Sciatic nerve (tissue), 2 donors: ENCODE measurements at regions of chr20 and their contacts with region 1.

Region 1: DNA sequence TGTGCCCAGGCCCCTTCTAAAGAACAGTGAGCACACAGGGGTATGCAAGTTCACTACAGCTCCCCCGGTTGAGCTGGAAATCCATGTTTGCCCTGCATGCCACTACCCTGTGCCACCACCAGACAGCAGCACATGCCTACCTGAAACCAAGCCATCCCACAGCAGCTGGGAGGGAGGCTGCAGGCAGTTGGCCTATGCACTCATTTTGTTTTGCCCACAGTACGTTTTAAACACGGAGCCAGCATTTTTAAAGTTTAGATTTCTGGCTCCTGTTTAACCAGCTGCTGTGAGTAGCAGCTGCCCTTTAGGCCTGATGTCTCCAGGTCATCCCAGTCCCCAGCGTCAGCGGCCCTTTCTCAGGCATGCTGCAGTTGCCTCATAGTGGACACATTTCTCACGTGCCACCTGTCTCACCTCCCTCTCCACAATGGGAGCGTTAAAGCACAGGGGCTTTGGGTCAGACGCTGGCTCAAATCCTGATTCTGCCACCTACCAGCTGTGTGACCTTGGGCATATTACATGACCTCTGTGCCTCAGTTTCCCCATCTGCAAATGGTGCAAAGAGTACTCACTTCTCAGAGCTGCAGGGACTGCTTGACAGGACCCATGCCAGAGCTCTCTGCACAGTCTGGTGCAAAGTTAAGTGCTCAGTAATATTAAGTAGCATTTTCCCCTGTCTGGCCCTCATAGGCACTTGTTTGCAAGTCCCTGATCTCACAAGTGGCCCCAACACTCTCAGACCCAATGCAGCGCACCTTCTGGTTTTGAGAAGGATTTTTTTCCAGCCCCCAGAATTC is 8.1 kb upstream of the UBE2V1 start:
- DNase-seq: no peak
- ATAC-seq: peak; percentile 72

Region 2: DNA sequence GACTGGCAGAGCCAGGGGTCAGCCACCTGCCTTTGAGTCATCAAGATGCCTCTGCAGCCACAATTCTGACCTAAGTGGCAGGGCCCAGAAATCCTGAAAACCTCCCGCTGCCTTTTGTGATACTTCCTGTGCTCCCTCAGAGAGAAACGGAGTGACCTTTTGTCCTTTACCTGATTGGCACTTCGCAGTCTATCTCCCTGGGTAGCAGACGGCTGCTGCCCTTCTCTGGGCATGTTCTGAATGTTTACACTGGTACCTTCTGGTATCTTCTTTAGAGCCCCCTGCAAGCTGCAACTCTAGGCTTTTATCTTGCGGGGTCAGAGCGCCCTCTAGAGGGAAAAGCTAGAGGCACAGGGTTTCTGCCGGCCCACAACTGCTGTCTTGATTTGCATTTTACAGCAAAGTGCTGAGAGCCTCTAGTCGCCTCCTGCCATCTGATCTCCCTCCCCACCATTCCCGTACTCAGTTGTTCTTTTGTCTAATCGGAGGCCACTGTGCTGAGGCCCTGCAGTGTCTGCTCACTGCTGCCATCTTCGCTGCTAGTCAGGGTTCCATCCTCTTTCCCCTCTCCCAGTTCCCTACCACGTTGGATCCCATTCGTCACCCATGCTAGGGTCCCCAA is 232.6 kb before region 1 on chr20:
- intact Hi-C with region 1: no loop called
- DNase-seq: peak; percentile 76
- ATAC-seq: peak; percentile 43

Region 3: DNA sequence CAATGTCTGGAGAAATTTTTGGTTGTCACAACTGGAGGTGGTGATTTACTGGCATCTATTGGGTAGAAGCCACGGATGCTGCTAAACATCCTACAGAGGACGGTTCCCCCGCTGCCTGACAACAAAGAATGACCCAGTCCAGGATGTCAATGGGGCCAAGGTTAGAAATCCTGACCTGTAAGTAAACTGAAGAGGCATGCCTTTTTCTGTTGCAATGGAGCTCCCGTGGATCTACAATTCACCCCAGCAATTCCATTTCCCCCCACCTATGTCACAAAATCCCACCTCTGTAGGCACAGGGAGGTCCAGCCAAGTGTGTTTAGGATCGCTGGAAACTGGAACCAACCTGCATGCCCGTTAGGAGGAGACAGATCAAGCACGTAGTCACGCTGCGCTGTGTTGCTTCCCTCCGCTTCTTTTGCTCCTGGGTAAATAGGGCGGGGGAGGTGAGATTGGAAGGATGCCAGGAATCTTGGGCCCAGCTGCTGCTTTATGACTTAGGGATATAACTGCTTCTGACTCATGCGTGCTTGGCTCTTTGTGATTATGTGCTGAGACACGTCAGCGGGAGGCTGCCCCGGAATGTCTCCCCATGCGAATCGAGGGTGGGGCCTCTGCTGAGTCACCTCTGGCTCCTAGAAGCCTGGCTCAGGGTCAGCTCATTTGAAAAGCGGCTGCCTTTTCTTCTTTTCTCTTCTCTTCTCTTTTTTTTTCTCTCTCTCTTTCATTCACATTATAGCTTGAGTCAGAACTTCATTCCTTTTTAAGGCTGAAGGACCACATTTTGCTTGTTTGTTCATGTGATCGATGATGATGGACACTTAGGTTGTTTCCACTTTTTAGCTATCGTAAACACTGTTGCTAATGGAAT is 44.8 kb after region 1 on chr20:
- intact Hi-C with region 1: loop called (anchors 5 kb)
- DNase-seq: peak; percentile 95
- ATAC-seq: peak; percentile 97